ENCODE measurements at regions of chr2 and their contacts with region 1.

Region 1: DNA sequence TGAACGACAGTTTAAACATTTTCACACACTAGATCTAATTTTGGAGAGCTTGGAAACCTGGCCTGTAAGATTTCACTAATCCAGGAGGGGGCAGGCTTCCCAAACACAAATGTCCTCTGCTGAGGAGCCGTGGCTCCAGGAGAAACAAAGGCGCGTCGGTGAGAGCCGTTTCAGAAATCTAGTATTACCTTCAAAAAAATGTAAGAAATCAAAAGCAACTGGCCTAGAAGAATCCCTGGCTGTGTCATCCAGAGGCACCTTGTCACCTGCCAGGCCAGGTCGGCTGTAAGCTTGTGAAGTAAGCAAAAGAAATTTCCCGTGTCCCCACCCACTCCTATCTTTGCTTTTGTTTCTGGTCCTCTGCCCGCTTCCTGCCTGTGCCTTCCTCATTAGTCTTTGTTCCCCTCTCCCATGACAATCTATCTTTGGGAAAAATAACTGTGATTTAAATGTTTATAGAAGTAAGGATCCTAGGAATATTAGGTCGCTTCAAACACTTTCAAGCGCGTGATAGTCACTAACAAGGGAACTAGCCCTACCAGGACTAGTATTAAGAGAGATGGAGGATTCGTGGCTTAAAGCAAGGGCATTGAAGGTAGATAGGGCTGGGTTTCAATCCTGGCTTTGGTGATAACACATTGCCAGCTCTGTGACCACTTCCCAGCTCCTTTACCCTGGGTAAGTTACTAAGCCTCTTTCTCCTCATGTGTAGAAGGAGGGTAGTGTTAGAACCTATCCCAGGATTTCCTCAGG is 99.5 kb upstream of the STK39 start:
- DNase-seq: peak; percentile 20
- H3K4me3 ChIP-seq: peak overlapping the region; percentile 71
- H3K27ac ChIP-seq: no peak overlapping the region
- H3K27me3 ChIP-seq: no peaks in the 10 kb centered on the region
- CTCF ChIP-seq: peak; percentile 79

Region 2: DNA sequence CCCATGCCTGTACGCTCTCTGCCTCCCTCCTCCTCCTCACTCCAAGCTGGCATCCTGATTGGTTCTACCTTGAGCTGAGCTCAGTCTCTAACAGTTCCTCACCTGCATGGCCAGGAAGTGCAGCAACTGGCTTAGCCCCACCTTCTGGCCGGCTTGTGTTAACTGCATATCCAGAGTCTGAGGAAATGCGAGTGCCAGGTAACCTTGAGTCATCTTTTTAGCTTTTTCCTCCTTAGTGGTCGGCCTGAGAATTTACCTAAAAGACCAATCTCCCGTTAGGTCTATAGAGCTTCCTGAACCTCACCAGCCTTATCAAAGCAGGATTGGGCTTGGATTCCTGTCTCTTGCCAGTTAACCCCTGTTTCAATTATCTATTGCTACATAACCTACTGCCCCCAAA is 10.0 kb before region 1 on chr2:
- CTCF ChIA-PET with region 1: interaction called, 10 read pairs
- POLR2A ChIA-PET with region 1: no interaction called
- DNase-seq: no peak
- H3K4me3 ChIP-seq: no peak overlapping the region
- H3K27ac ChIP-seq: no peak overlapping the region
- H3K27me3 ChIP-seq: peaks cover 10% of the 10 kb centered on the region
- CTCF ChIP-seq: 0 out of 2 replicates have a peak, but pooled peaks have one; percentile 7

Region 3: DNA sequence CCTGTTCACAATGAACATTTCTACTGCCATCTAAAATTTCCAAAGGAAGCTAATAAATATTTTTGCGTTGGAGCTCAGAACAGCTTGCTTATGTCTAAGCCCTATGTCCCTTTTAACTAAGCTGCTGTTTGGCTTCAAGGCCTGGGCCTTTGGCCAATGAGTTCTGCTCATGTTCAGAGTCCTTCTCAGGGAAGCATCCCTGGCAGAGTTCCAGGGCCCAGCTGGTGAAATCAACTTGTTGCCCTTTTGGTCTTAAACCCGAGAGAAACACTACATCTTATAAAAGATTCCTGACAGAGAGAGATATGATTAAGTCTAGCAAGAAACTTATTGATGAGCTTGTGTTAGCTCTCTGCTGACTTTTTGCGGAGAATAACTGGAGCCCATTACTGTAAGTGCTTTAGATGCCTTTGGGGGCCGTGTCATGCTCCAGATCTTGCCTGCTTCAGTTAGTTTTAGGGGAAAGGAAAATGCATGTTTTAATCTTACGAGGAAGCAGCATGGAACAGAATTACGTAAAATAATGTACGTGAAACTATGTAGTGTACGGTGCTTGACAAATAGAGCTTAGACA is 353.0 kb after region 1 on chr2:
- CTCF ChIA-PET with region 1: interaction called, 100 read pairs
- POLR2A ChIA-PET with region 1: no interaction called
- DNase-seq: peak; percentile 92
- H3K4me3 ChIP-seq: no peak overlapping the region
- H3K27ac ChIP-seq: no peak overlapping the region
- H3K27me3 ChIP-seq: no peaks in the 10 kb centered on the region
- CTCF ChIP-seq: no peak

Region 4: GRCh38 chr2:168752361-168752760 is 405.5 kb after region 1 on chr2:
- CTCF ChIA-PET with region 1: interaction called, 105 read pairs
- POLR2A ChIA-PET with region 1: no interaction called
- DNase-seq: no peak
- H3K4me3 ChIP-seq: no peak overlapping the region
- H3K27ac ChIP-seq: no peak overlapping the region
- H3K27me3 ChIP-seq: no peaks in the 10 kb centered on the region
- CTCF ChIP-seq: no peak

Region 5: GRCh38 chr2:168766600-168766999 is 419.7 kb after region 1 on chr2:
- CTCF ChIA-PET with region 1: interaction called, 10 read pairs
- POLR2A ChIA-PET with region 1: no interaction called
- DNase-seq: no peak
- H3K4me3 ChIP-seq: no peak overlapping the region
- H3K27ac ChIP-seq: no peak overlapping the region
- H3K27me3 ChIP-seq: no peaks in the 10 kb centered on the region
- CTCF ChIP-seq: no peak

Region 6: GRCh38 chr2:168920504-168921157 is 573.7 kb after region 1 on chr2:
- CTCF ChIA-PET with region 1: interaction called, 45 read pairs
- POLR2A ChIA-PET with region 1: no interaction called
- DNase-seq: peak; percentile 10
- H3K4me3 ChIP-seq: no peak overlapping the region
- H3K27ac ChIP-seq: no peak overlapping the region
- H3K27me3 ChIP-seq: no peaks in the 10 kb centered on the region
- CTCF ChIP-seq: peak; percentile 58

Measured in AG04450 (cell line).